ENCODE measurements at regions of chr9 and their contacts with region 1.

Region 1: GRCh38 chr9:112898872-112899311 is 8.2 kb upstream of the SLC46A2 start:
- DNase-seq: no peak
- ATAC-seq: no peak
- H3K4me3 ChIP-seq: no peak overlapping the region
- H3K27ac ChIP-seq: no peak overlapping the region
- H3K4me1 ChIP-seq: no peaks in the 10 kb centered on the region
- H3K27me3 ChIP-seq: peaks cover 0 to 1% of the 10 kb centered on the region in 2 donors

Region 2: GRCh38 chr9:112844771-112845542 is 53.9 kb before region 1 on chr9:
- intact Hi-C with region 1: loop called in 1 of 2 experiments (anchors 5 kb)
- DNase-seq: peak; percentile 84 to 95
- ATAC-seq: peak; percentile 90
- H3K4me3 ChIP-seq: no peak overlapping the region
- H3K27ac ChIP-seq: no peak overlapping the region
- H3K4me1 ChIP-seq: no peaks in the 10 kb centered on the region
- H3K27me3 ChIP-seq: no peaks in the 10 kb centered on the region

Region 3: DNA sequence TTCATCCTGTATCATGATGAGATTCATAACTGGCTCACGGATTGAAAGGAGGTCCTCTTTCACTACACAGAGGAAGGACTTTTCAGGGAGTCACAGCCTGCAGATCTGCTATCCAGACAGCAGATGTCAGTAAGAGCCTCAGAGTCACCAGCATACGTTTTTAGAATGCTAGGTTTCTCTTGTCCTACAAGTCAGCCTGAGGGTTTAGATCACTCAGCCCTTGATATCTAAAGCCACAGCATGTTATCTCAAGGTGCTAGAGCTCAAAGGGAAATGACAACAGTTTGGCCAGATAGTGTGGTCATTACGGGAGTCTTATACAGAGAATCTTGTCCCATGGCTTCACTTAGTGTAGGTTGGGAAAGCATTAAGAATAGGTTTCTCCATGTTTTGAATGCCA is 22.7 kb after region 1 on chr9:
- intact Hi-C with region 1: loop called in 1 of 2 experiments (anchors 1 kb)
- DNase-seq: no peak
- ATAC-seq: peak; percentile 48
- H3K4me3 ChIP-seq: no peak overlapping the region
- H3K27ac ChIP-seq: no peak overlapping the region
- H3K4me1 ChIP-seq: no peaks in the 10 kb centered on the region
- H3K27me3 ChIP-seq: no peaks in the 10 kb centered on the region